ENCODE measurements at regions of chr13 and their contacts with region 1.

Region 1: DNA sequence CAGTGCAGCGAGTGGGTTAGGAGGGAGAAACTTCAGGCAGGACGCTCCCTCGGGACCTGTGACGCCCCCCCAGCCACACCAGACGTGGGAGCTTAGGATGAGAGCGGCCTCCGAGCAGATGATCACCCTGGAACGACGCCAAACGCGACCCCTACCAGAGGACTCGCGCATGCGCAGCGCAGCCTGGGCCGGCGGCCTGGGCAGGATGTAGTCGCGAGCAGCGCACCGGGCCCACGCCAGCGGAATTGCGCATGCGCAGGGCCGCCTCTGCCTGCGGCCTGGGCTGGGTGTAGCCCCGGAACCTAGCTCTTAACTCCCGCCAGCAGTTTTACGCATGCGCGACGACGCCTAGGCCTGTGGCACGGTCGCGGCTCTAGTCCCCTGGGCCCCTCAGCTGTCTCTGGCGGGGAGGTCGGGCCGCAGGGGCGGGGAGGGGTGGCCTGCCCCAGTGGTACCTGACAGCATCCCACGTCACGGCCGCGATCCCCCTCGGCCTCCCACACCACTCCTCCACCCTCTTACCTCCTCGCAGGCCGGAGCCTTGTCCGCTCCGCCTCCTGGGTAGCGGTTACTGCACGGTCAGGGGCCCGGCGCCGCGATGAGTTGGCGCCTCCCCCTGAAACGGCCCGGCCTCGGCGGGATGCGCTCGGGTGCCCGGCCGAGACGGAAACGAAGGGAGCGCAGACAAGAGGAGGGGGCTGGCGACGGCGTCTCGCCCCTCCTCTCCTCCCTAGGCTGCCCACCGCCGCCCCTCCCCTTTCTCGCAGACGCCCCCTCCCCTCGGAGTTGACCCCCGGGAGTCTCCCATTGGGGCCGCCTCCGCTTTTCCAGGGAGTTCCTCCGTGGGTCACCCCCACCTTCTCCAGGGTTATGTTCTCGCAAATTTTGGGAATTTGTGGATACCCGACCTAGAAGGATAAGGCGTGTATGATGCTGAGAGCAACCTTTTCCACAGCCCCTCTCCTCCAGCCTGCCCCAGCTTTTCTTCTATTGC is at the start of gene RCBTB2:
- DNase-seq: peak; percentile 99 to 100 (median 99)
- ATAC-seq: peak; percentile 97 to 98 (median 97)
- H3K4me3 ChIP-seq: peak within 1 kb of the TSS; percentile 33 to 90 (median 72)
- H3K27ac ChIP-seq: peak within 1 kb of the TSS; percentile 95 to 99 (median 98)
- H3K4me1 ChIP-seq: peaks cover 0 to 73% (median 20%) of the 10 kb centered on the region in 12 donors
- H3K27me3 ChIP-seq: no peaks in the 10 kb centered on the region
- CTCF ChIP-seq: peak in 1 of 12 donors; percentile 10
- POLR2A ChIP-seq: peak in 1 of 2 donors; percentile 87
- total RNA-seq, gene RCBTB2: 5.9 to 16.2 (median 11.8) TPM

Region 2: GRCh38 chr13:48405875-48406274 is 126.9 kb before region 1 on chr13:
- intact Hi-C with region 1: loop called in 3 of 10 experiments (anchors 5 kb)
- DNase-seq: no peak
- ATAC-seq: no peak
- H3K4me3 ChIP-seq: peak overlapping the region in 7 of 12 donors; percentile 6 to 75 (median 29)
- H3K27ac ChIP-seq: peak overlapping the region in 11 of 12 donors; percentile 36 to 94 (median 72)
- H3K4me1 ChIP-seq: peaks cover 0 to 80% (median 13%) of the 10 kb centered on the region in 12 donors
- H3K27me3 ChIP-seq: no peaks in the 10 kb centered on the region
- CTCF ChIP-seq: no peak
- POLR2A ChIP-seq: no peak

Region 3: DNA sequence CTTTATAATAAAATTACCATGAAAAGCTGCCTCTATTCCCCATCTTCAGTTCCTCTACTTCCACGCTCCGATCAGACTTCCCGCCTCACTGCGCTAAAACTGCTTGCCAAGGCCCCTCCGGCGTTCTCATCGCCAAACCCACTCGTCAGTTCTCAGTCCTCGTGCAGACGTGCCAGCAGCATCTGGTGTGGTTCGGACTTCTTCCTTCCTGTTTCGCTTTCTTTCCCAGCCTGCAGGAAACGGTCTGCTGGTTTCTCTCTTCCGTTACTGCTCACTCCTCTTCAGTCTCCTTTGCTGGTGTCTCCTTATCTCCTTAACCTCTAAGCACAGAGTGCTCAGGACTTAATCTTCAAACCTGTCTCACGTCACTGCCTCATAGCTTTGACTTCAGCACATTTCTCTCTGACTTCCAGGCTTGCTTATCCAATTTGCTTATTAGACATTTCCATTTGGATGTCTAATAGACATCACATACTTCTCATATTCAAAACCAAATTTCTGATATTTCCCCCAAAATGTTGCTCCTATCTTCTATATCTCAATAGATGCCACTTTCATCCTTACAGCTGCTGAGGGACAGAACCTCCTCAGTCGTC is 40.2 kb before region 1 on chr13:
- intact Hi-C with region 1: loop called in 1 of 10 experiments (anchors 5 kb)
- DNase-seq: peak; percentile 86 to 90 (median 88)
- ATAC-seq: peak; percentile 89 to 95 (median 92)
- H3K4me3 ChIP-seq: peak overlapping the region in 10 of 12 donors; percentile 21 to 55 (median 43)
- H3K27ac ChIP-seq: peak overlapping the region; percentile 55 to 93 (median 76)
- H3K4me1 ChIP-seq: peaks cover 0 to 80% (median 24%) of the 10 kb centered on the region in 12 donors
- H3K27me3 ChIP-seq: no peaks in the 10 kb centered on the region
- CTCF ChIP-seq: no peak
- POLR2A ChIP-seq: no peak

Measured in heart left ventricle (tissue), 16 donors.